Posterior cingulate gyrus (tissue), 11 donors: ENCODE measurements at regions of chr15 and their contacts with region 1.

Region 1: GRCh38 chr15:29925227-29926082 is 103.2 kb upstream of the TJP1 start:
- DNase-seq: peak in 4 of 10 donors; percentile 41 to 88 (median 62)

Region 2: DNA sequence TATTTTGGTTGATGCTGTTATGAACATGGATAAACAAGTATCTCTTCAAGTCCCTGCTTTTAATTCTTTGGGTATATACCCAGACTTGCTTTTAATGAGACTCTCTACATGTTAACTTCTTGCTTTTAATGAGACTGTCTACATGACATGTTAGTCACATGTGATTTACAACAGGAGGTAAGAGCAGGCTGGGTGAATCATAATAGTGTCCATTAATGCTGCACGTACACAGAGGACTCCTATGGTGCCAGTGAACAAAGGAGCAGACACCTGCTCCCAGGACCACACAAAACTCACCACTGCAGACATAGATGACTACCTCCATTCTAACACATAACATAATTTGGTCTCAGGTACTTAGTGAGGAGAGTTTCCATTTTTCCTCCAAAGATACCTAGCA is 382.4 kb before region 1 on chr15:
- intact Hi-C with region 1: no loop called
- DNase-seq: no peak

Region 3: DNA sequence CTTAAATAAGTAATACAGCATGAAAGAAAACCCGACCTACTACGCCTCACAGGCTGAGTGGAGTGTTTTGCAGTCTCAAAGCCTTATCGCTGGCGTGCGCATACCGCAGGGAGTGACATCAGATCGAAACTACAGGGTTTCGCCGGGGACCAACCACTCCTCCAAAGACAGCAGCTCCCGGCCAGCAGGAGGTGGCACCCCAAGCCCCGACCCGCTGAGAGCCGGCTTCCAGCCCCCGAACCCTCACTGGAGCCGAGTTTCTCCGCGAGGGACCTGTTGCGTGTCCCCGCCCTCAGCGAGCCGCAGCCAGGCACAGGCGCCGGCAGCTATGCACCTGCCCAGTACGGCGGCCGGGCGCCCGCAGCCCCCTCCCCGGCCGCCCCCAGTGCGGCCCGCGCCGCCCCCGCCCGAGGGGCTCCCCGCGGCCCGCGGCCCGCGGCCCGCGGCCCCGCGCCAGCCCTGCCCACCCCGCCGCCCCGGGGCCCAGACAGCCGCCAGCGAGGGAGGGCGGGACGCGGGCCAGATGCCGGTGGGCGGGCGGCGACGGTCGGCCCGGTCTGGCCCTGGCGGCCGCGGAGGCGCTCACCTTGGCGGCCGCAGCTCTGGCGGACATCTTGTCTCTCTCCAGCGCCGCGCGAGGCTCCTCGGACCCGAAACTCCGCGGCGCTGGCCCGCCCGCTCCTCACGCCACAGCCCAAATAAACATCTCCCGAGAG is 103.9 kb before region 1 on chr15:
- intact Hi-C with region 1: loop called (anchors 10 kb)
- DNase-seq: peak in 9 of 10 donors; percentile 35 to 93 (median 51)

Region 4: DNA sequence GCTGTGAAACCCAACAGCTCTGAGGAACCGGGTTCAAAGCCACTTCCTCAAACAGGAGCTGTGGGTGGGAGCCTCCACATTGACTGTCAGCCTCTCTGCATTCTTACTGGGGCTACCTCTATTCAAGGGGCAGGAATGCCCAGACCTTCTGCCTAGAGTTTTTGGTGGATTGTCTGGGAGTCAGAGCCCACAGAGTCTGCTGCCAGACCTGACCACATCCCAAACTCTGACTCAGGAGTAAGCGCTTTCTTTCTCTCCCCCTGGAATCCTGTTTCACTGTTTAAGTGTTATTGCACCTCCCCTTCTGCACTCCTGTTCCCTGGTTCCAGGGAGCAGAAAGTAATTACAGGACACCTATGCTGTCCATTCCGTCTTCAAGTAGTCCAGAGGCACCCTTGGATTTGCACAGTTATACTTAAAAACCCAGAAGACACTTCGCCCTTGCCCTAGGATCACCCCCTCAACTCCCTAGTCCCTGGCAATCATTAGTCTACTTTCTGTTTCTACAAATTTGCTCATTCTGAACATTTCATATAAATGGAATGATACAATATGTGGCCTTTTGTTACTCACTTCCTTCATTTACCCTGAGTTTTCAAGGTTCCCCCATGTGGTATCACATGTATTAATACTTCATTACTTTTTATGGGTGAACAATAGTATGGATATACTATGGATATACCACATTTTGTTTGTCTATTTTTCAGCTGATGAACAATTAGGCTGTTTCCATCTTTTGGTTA is 65.3 kb before region 1 on chr15:
- intact Hi-C with region 1: no loop called
- DNase-seq: no peak